Vagina (tissue), 2 donors: ENCODE measurements at regions of chr12 and their contacts with region 1.

Region 1: DNA sequence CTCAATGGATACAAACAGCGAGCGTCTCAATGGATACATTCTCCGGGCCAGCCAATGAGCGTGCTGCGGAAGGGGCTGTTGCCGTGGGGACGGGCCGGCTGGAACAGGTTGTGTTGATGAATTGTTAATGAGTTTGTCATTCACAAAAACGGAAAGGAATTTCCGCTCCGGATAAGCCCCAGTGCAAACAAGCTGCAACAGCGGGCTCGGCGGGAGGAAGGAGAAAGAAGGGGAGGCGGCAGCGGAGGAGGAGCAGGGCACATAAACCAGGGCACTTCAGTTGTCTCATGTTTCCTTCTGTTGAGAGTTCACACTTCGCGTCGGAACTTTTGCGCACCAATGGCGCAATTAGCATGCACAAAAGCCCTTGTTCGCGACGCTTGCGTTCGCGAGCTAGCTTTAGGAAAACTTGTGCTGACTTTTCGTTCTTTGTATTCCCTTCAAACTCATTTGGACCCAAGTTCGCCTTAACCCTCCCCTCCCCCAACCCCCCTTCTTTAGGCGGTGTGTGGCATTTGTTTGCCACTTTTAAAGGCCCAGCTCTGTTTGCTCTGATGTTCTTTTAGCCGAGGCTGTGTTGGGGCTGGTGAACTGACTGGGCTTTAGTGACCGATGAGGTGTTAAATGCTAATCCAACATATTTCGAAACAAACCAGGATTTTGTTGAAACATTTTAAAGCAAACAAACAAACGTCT is at the start of gene DUSP6:
- DNase-seq: peak in 1 of 2 donors; percentile 98
- H3K4me3 ChIP-seq: peak within 1 kb of the TSS; percentile 77 to 81
- H3K27ac ChIP-seq: peak within 1 kb of the TSS; percentile 93
- H3K4me1 ChIP-seq: peaks cover 31% of the 10 kb centered on the region
- H3K27me3 ChIP-seq: no peaks in the 10 kb centered on the region
- CTCF ChIP-seq: no peak
- POLR2A ChIP-seq: no peak
- total RNA-seq, gene DUSP6: 51.1 TPM

Region 2: DNA sequence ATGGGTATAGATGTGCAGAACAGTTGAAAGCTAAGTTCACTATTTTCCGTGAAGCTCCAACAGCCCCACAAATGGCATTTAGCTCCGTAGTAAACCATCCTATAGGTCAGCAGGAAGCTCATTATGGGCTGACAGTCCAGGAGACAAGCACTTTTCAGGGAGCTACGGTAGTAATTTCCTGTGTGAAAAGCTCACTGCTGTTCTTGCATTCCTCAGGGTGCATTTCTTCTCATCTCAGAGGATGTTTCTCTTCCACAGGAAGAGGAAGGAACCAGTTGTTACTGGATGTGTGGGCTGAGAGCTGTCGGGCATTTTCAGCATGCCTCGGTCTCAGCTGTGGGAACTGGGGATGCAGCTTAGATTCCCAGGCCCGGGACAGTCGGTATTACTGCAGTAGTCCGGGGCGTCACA is 99.2 kb after region 1 on chr12:
- intact Hi-C with region 1: loop called (anchors 2 kb)
- DNase-seq: no peak
- H3K4me3 ChIP-seq: no peak overlapping the region
- H3K27ac ChIP-seq: no peak overlapping the region
- H3K4me1 ChIP-seq: peaks cover 16% of the 10 kb centered on the region
- H3K27me3 ChIP-seq: no peaks in the 10 kb centered on the region
- CTCF ChIP-seq: no peak
- POLR2A ChIP-seq: no peak

Region 3: DNA sequence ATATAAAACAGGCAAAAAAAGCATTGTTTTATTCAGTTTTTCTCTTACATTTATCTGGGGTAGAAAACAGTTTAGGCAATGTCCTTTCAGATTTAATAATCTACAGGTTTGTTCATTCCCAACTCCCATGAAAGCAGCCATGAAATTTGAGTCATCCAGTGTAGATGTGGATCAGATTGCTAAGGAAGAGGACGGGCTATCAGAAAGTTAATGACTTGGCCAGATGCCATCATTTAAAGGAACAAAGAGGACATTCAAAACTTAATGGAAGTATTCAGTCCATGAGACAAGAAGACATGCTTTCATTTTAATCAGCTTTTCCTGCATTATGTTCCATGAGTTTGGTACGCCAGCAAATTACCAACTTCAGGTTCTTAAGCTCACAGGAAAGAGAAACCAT is 204.3 kb after region 1 on chr12:
- intact Hi-C with region 1: no loop called
- DNase-seq: no peak
- H3K4me3 ChIP-seq: no peak overlapping the region
- H3K27ac ChIP-seq: no peak overlapping the region
- H3K4me1 ChIP-seq: no peaks in the 10 kb centered on the region
- H3K27me3 ChIP-seq: no peaks in the 10 kb centered on the region
- CTCF ChIP-seq: no peak
- POLR2A ChIP-seq: no peak